ENCODE measurements at regions of chr2 and their contacts with region 1.

Region 1: DNA sequence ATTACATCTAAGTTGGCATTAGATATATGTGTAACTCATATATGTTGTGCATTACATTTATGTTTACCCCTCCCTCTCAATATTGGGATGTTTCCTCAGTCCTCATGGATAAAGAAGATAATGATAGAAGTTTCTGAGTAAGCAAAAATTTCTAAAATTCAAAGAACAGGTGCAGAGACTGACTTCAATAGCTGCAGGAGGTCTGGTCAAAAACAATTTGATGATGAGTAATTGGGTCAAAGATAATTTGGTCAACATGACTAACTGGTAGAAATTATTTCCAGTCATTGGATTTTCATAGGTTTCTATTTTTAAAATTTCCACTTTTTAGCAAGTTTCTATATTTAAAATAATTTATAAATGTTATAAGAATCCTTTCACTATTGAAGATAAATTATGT is 1130.9 kb upstream of the SLC39A10 start:
- DNase-seq: no peak
- ATAC-seq: no peak
- H3K4me3 ChIP-seq: no peak overlapping the region
- H3K27ac ChIP-seq: no peak overlapping the region
- H3K4me1 ChIP-seq: no peaks in the 10 kb centered on the region
- H3K27me3 ChIP-seq: no peaks in the 10 kb centered on the region
- CTCF ChIP-seq: no peak
- POLR2A ChIP-seq: no peak
- RAD21 ChIP-seq: no peak

Region 2: GRCh38 chr2:192773044-192773443 is 1753.1 kb before region 1 on chr2:
- CTCF ChIA-PET with region 1: no interaction called
- POLR2A ChIA-PET with region 1: no interaction called
- RAD21 ChIA-PET with region 1: no interaction called
- intact Hi-C with region 1: no loop called
- DNase-seq: no peak
- ATAC-seq: no peak
- H3K4me3 ChIP-seq: no peak overlapping the region
- H3K27ac ChIP-seq: no peak overlapping the region
- H3K4me1 ChIP-seq: no peaks in the 10 kb centered on the region
- H3K27me3 ChIP-seq: no peaks in the 10 kb centered on the region
- CTCF ChIP-seq: no peak
- POLR2A ChIP-seq: no peak
- RAD21 ChIP-seq: no peak

Region 3: DNA sequence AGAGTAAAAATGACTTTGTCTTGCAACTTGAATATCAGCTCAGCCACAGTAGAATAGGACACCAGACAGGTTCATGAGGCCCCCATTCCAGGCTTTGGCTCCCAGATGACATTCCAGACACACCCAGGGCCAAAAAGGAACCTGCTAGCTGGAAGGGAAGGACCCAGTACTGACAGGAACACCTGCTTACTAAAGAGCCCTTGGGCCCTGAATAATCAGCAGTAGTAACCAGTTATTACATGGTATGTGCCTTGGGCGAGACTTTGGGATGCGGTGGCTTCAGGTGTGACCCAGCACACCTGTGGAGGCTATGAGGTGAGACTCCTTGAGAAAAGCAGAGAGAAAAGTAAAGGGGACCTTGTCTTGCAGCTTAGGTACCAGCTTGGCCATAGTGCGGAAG is 172.6 kb before region 1 on chr2:
- CTCF ChIA-PET with region 1: no interaction called
- POLR2A ChIA-PET with region 1: no interaction called
- RAD21 ChIA-PET with region 1: no interaction called
- intact Hi-C with region 1: no loop called
- DNase-seq: no peak
- ATAC-seq: no peak
- H3K4me3 ChIP-seq: no peak overlapping the region
- H3K27ac ChIP-seq: no peak overlapping the region
- H3K4me1 ChIP-seq: no peaks in the 10 kb centered on the region
- H3K27me3 ChIP-seq: no peaks in the 10 kb centered on the region
- CTCF ChIP-seq: no peak
- POLR2A ChIP-seq: no peak
- RAD21 ChIP-seq: no peak

Region 4: DNA sequence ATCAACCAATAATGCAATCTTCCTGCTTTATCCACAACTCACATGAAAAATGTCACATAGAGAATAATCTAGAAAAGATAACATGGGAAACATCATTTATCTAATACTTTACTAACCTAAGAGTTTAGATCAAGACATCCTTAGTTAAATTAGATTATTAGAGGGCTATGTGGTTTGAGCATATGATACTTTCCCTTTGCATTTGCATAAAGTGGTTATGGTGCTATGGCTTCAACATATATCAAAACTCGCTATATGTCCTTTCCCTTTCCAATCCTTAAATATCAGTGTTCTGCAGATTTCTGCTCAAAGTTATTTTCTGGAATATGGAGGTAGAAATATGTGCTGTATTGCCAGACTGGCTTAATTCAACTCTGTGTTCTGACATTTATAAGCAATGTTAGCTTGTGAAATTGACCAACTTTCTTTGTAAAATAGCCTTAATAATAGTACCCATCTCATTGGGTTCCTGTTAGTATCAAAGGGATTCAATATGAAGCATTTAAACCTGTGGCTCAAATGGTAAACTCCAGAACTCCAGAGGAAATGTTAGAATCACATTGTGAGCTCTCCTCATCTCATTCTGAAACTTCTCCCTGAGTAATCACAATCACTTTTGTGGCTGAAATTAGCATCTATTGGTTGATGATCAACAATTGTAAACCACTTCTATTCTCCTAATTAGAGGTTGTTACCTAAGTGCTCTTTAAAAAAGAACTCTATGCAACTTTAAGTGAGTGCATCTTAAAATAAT is 41.0 kb after region 1 on chr2:
- CTCF ChIA-PET with region 1: no interaction called
- POLR2A ChIA-PET with region 1: no interaction called
- RAD21 ChIA-PET with region 1: no interaction called
- intact Hi-C with region 1: loop called (anchors 2 kb)
- DNase-seq: no peak
- ATAC-seq: no peak
- H3K4me3 ChIP-seq: no peak overlapping the region
- H3K27ac ChIP-seq: no peak overlapping the region
- H3K4me1 ChIP-seq: no peaks in the 10 kb centered on the region
- H3K27me3 ChIP-seq: no peaks in the 10 kb centered on the region
- CTCF ChIP-seq: no peak
- POLR2A ChIP-seq: no peak
- RAD21 ChIP-seq: no peak